Activated B cell treated with CpG ODN at 0.5 μM for 24 hours (primary cell): ENCODE measurements at regions of chr17 and their contacts with region 1.

Region 1: GRCh38 chr17:1260086-1260769 is 10.0 kb upstream of the BHLHA9 start:
- DNase-seq: no peak
- ATAC-seq: no peak
- H3K4me3 Mint-ChIP-seq: peak overlapping the region; percentile 41
- H3K27ac Mint-ChIP-seq: no peak overlapping the region
- H3K4me1 Mint-ChIP-seq: peaks cover 16% of the 10 kb centered on the region
- H3K27me3 Mint-ChIP-seq: peaks cover 16% of the 10 kb centered on the region
- CTCF ChIP-seq: no peak

Region 2: GRCh38 chr17:1122533-1123392 is 137.5 kb before region 1 on chr17:
- CTCF ChIA-PET with region 1: no interaction called
- POLR2A ChIA-PET with region 1: no interaction called
- intact Hi-C with region 1: loop called (anchors 2 kb)
- DNase-seq: peak; percentile 74
- ATAC-seq: peak; percentile 97
- H3K4me3 Mint-ChIP-seq: no peak overlapping the region
- H3K27ac Mint-ChIP-seq: no peak overlapping the region
- H3K4me1 Mint-ChIP-seq: peaks cover 13% of the 10 kb centered on the region
- H3K27me3 Mint-ChIP-seq: no peaks in the 10 kb centered on the region
- CTCF ChIP-seq: no peak

Region 3: GRCh38 chr17:1164935-1165556 is 95.2 kb before region 1 on chr17:
- CTCF ChIA-PET with region 1: no interaction called
- POLR2A ChIA-PET with region 1: no interaction called
- intact Hi-C with region 1: no loop called
- DNase-seq: no peak
- ATAC-seq: no peak
- H3K4me3 Mint-ChIP-seq: no peak overlapping the region
- H3K27ac Mint-ChIP-seq: no peak overlapping the region
- H3K4me1 Mint-ChIP-seq: peaks cover 19% of the 10 kb centered on the region
- H3K27me3 Mint-ChIP-seq: no peaks in the 10 kb centered on the region
- CTCF ChIP-seq: no peak

Region 4: GRCh38 chr17:1186923-1187771 is 73.1 kb before region 1 on chr17:
- CTCF ChIA-PET with region 1: no interaction called
- POLR2A ChIA-PET with region 1: no interaction called
- intact Hi-C with region 1: no loop called
- DNase-seq: peak; percentile 73
- ATAC-seq: peak; percentile 79
- H3K4me3 Mint-ChIP-seq: peak overlapping the region; percentile 26
- H3K27ac Mint-ChIP-seq: no peak overlapping the region
- H3K4me1 Mint-ChIP-seq: peaks cover 60% of the 10 kb centered on the region
- H3K27me3 Mint-ChIP-seq: no peaks in the 10 kb centered on the region
- CTCF ChIP-seq: no peak

Region 5: GRCh38 chr17:1532836-1533602 is 272.8 kb after region 1 on chr17:
- CTCF ChIA-PET with region 1: interaction called, 6 read pairs
- POLR2A ChIA-PET with region 1: no interaction called
- intact Hi-C with region 1: loop called (anchors 1 kb)
- DNase-seq: peak; percentile 45
- ATAC-seq: peak; percentile 97
- H3K4me3 Mint-ChIP-seq: no peak overlapping the region
- H3K27ac Mint-ChIP-seq: no peak overlapping the region
- H3K4me1 Mint-ChIP-seq: peaks cover 13% of the 10 kb centered on the region
- H3K27me3 Mint-ChIP-seq: no peaks in the 10 kb centered on the region
- CTCF ChIP-seq: no peak